GM10248 (cell line): ENCODE measurements at regions of chr11 and their contacts with region 1.

Region 1: GRCh38 chr11:88552377-88553062 is 215.0 kb upstream of the CTSC start:
- DNase-seq: peak; percentile 38
- CTCF ChIP-seq: peak; percentile 89

Region 2: DNA sequence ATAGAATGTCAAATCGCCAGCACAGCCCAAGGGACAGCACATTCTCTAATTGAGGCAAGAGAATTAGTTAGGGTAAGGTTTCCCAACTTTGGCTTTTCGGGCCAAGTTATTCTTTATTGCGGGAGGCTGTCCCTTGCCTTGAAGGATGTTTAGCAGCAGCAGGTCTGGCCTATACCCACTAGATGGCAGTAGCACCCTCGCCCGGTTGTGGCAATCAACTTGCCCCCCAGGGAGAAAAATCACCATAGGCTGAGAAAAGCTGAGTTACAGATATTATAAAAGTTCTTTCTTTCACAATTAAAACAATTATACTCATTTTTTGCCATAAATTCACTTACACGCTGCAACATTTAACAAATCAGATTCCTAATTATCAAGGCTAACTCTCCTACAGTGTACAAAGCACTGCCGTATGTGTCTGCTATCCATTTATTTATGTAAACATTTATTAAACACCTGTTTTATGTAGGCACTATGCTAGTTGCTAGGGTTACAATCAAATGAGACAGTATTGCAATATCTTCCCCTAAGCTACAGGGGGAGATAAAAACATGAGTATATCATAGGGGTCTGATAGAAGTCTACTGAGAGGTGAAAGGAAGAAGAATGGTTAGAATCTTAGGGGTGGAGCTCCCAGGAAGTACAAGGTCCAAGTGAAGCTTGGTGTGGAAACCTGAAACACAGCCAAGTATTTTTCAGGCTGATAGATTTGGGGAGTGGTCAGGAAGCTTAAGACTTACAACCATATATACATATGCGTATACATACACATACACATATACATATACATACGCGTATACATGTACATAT is 829.6 kb before region 1 on chr11:
- CTCF ChIA-PET with region 1: interaction called, 19 read pairs
- POLR2A ChIA-PET with region 1: no interaction called
- DNase-seq: peak; percentile 10
- CTCF ChIP-seq: peak; percentile 69

Region 3: DNA sequence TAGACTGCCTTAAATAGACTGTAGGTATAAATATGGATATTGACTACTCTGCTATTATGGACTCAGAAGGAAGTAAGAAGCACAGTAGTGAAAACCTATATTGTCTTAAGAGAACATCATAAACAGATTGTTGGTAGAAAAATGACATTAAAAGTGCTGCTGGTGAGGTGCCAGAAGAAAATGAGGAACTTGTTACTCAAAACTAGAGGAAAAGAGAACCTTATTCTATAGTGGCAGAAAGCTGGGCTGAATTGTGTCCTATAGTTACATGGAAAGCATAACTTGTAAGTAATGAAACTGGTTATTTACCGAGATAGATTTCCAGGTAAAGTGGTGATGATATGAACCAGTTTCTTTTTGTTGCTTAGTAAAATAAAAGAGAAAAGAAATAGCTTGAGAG is 105.2 kb before region 1 on chr11:
- CTCF ChIA-PET with region 1: no interaction called
- POLR2A ChIA-PET with region 1: no interaction called
- DNase-seq: no peak
- CTCF ChIP-seq: no peak

Region 4: DNA sequence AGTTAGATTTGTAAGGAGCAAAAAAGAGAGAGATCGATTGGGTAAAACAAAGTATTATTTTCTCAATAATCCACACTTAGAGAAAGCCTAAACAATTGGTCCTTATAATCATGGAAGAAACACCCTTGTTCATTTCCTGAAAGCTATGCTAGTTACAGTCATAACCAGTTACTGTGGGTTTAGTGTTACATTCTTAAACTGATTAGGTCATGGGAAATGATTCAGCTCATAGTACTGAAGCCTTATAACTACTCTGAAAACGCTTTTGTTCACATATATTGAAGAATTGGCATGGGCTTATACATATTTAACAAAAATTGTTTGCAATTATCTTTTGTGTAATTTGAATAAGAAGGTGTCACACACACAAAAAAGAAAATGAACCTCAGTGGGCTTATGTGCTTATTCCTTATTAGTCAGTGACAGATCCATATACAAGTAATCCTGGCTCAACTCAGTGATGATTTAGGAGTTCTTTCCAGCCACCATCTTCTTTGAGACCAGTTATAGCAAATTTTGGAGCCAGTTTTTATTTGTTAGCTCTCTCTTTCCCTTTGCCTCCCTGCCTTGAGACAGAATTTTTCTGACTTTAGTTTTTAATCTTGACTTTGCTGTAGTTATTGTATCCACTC is 16.5 kb before region 1 on chr11:
- CTCF ChIA-PET with region 1: interaction called, 38 read pairs
- POLR2A ChIA-PET with region 1: no interaction called
- DNase-seq: peak; percentile 24
- CTCF ChIP-seq: no peak